Pancreas (tissue), 10 donors: ENCODE measurements at regions of chr5 and their contacts with region 1.

Region 1: GRCh38 chr5:124912638-124913328 is 166.3 kb upstream of the ZNF608 start:
- DNase-seq: no peak
- ATAC-seq: no peak
- H3K4me3 ChIP-seq: no peak overlapping the region
- H3K27ac ChIP-seq: no peak overlapping the region
- H3K4me1 ChIP-seq: peaks cover 8 to 18% (median 13%) of the 10 kb centered on the region in 3 donors
- H3K27me3 ChIP-seq: no peaks in the 10 kb centered on the region
- CTCF ChIP-seq: no peak

Region 2: DNA sequence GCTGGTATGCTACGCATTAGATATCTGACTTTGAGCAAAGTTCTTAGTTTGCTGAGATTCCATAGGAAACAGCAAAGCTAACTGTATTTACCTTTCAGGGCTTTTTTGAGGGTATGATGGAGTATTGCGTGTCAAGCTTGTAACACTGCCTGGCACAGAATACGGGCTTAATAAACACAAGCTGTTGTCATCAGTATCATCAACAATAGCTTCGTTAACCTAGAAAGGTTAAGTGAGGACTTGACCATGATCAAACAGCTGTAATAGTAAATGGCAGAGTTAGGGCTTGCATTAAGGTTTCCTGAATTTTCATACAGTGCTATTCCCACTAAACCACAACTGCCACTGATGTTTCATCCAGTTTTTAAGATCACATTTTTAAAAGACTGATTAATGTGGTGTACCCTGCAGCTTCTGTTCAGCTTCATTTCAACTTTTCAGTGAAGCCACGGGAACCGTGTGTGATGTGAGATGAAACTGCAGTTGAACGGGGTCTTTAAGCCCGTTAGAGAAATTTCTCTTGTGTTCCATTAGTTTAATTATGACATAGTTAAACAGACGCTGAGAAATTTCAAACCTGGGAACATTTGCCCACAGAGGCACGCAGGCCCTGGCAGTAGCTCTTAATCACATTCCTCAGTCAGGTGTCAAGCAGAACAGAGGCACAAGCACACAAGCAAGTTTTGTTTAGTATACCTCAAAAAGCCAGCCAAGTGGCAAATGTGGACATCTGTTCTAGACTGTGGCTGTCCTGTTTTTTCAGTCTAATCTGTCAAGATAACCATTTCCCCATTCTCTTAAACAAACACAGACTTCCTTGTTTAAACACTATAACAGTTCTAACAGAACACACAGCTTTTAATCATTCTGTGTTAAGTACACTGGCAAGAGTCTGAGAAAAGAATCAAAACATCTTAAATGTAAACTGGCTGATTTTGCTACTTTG is 313.5 kb before region 1 on chr5:
- intact Hi-C with region 1: no loop called
- DNase-seq: peak in 4 of 6 donors; percentile 59 to 84 (median 82)
- ATAC-seq: peak; percentile 92 to 96 (median 95)
- H3K4me3 ChIP-seq: peak overlapping the region in 1 of 4 donors; percentile 12
- H3K27ac ChIP-seq: peak overlapping the region; percentile 3 to 74 (median 15)
- H3K4me1 ChIP-seq: peaks cover 11 to 37% (median 34%) of the 10 kb centered on the region in 3 donors
- H3K27me3 ChIP-seq: no peaks in the 10 kb centered on the region
- CTCF ChIP-seq: no peak

Region 3: GRCh38 chr5:125006011-125006685 is 93.4 kb after region 1 on chr5:
- intact Hi-C with region 1: loop called in 1 of 3 experiments (anchors 10 kb)
- DNase-seq: no peak
- ATAC-seq: no peak
- H3K4me3 ChIP-seq: no peak overlapping the region
- H3K27ac ChIP-seq: no peak overlapping the region
- H3K4me1 ChIP-seq: peaks cover 0 to 22% (median 4%) of the 10 kb centered on the region in 3 donors
- H3K27me3 ChIP-seq: no peaks in the 10 kb centered on the region
- CTCF ChIP-seq: no peak